ENCODE measurements at regions of chr3 and their contacts with region 1.

Region 1: DNA sequence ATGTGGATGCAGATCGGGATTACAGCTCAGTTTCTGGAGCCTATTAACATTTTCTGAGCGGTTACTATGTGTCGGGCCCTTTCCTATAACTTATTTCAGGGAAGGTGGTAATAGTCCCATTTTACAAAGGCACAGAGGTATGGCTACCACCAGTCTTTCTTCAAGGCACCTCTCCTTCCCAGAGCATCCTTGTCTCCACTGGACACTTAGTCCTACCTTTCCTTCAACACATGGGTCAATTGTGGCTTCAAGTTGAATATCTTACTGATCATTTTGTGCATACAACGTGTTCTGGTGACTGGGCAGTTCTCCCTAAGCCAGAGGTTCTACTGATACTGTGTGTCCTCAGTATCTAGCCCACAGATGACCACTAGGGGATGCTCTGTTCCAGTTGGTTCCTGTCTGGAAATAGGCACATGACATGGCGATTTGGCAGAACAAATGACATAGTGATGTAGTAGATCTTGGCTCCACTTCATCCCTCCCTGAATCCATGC is 60.7 kb upstream of the CMTM8 start:
- DNase-seq: peak; percentile 68
- ATAC-seq: peak; percentile 79
- H3K4me3 Mint-ChIP-seq: peak overlapping the region; percentile 13
- H3K27ac Mint-ChIP-seq: no peak overlapping the region
- H3K4me1 Mint-ChIP-seq: peaks cover 11% of the 10 kb centered on the region
- H3K27me3 Mint-ChIP-seq: peaks cover 2% of the 10 kb centered on the region

Region 2: GRCh38 chr3:32066686-32067085 is 111.1 kb before region 1 on chr3:
- CTCF ChIA-PET with region 1: no interaction called
- DNase-seq: no peak
- ATAC-seq: no peak
- H3K4me3 Mint-ChIP-seq: no peak overlapping the region
- H3K27ac Mint-ChIP-seq: no peak overlapping the region
- H3K4me1 Mint-ChIP-seq: no peaks in the 10 kb centered on the region
- H3K27me3 Mint-ChIP-seq: no peaks in the 10 kb centered on the region

Region 3: GRCh38 chr3:32238453-32239306 is 60.9 kb after region 1 on chr3 and contains the start of gene CMTM8:
- CTCF ChIA-PET with region 1: interaction called, 14 read pairs
- DNase-seq: peak; percentile 57
- ATAC-seq: peak; percentile 87
- H3K4me3 Mint-ChIP-seq: peak within 1 kb of the TSS; percentile 77
- H3K27ac Mint-ChIP-seq: no peak within 1 kb of the TSS
- H3K4me1 Mint-ChIP-seq: peaks cover 13% of the 10 kb centered on the region
- H3K27me3 Mint-ChIP-seq: peaks cover 28% of the 10 kb centered on the region
- total RNA-seq, gene CMTM8: 4.0 to 4.4 TPM

Region 4: GRCh38 chr3:32285891-32286290 is 108.1 kb after region 1 on chr3:
- CTCF ChIA-PET with region 1: interaction called, 13 read pairs
- DNase-seq: peak; percentile 65
- ATAC-seq: peak; percentile 62
- H3K4me3 Mint-ChIP-seq: peak overlapping the region; percentile 8
- H3K27ac Mint-ChIP-seq: peak overlapping the region; percentile 83
- H3K4me1 Mint-ChIP-seq: peaks cover 31% of the 10 kb centered on the region
- H3K27me3 Mint-ChIP-seq: peaks cover 3% of the 10 kb centered on the region

Region 5: DNA sequence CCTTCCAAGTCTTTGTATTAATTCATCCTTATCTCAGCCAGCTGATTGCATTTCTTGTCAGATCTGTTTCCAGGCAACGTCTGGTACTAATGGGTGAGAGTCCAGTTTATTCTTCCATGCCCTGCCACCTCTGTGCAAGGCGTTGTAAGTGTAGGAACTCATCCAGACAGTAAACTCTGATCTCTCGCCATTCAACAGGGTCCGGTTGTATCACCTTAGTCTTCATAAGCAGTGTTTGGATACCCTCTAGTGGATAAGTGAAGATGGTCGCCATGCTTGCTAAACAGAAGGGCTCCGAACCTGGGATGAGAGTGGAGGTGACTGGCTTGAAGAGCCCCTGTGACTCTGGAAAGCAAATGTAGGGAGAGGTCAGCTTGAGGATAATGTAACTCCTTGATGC is 162.3 kb after region 1 on chr3:
- CTCF ChIA-PET with region 1: interaction called, 18 read pairs
- DNase-seq: no peak
- ATAC-seq: peak; percentile 63
- H3K4me3 Mint-ChIP-seq: no peak overlapping the region
- H3K27ac Mint-ChIP-seq: no peak overlapping the region
- H3K4me1 Mint-ChIP-seq: peaks cover 5% of the 10 kb centered on the region
- H3K27me3 Mint-ChIP-seq: no peaks in the 10 kb centered on the region

Measured in activated CD8-positive, alpha-beta memory T cell treated with anti-CD3 and anti-CD28 coated beads, Interleukin-2, amount 10 ng/mL, durations not matched to agents 7 days and 5 days (primary cell).